A549 (cell line): ENCODE measurements at regions of chr9 and their contacts with region 1.

Region 1: DNA sequence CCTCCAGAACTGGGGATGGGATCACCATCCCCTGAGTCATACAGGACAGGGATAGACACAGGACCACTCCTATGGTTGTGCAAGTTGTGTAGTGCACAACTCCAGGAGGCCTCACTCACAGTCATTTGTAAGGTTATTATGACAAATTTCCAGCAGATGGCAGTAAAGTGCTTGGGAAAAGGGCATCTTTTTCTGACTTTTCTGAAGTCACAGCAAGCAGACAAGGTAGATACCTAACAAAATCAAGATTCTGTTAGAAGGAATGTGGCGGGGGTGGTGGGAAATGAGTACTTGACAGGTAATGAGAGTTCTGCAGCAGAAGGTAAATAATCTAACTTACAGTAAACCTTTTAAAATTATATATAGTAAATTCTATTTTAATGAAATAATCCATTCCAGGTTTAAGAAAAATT is 16.7 kb upstream of the KIF27 start:
- DNase-seq: peak; percentile 56 to 70
- ATAC-seq: peak; percentile 84 to 86
- H3K4me3 ChIP-seq: no peak overlapping the region
- H3K27ac ChIP-seq: no peak overlapping the region
- H3K4me1 ChIP-seq: peaks cover 23% of the 10 kb centered on the region; the same call in 2 of the 3 replicates
- CTCF ChIP-seq: peak; percentile 84
- EP300 ChIP-seq: no peak
- POLR2A ChIP-seq: no peak
- RAD21 ChIP-seq: peak; percentile 85 to 88

Region 2: GRCh38 chr9:83920927-83921707 is 16.8 kb before region 1 on chr9 and contains the start of gene KIF27:
- CTCF ChIA-PET with region 1: interaction called, 12 read pairs
- POLR2A ChIA-PET with region 1: interaction called, 18 read pairs
- DNase-seq: peak; percentile 88 to 98
- ATAC-seq: peak; percentile 90 to 97
- H3K4me3 ChIP-seq: peak within 1 kb of the TSS; percentile 81
- H3K27ac ChIP-seq: peak within 1 kb of the TSS; percentile 93 to 97
- H3K4me1 ChIP-seq: peaks cover 7% of the 10 kb centered on the region; the same call in 2 of the 3 replicates
- CTCF ChIP-seq: peak; percentile 50
- EP300 ChIP-seq: no peak
- POLR2A ChIP-seq: peak; percentile 85
- RAD21 ChIP-seq: no peak; a peak in 3 of 5 replicates
- polyA plus RNA-seq, gene KIF27: 4.1 and 6.0 TPM in 2 replicates

Region 3: GRCh38 chr9:84315278-84315877 is 377.5 kb after region 1 on chr9:
- CTCF ChIA-PET with region 1: interaction called, 11 read pairs
- POLR2A ChIA-PET with region 1: no interaction called
- DNase-seq: peak; percentile 61 to 71
- ATAC-seq: peak; percentile 80 to 89
- H3K4me3 ChIP-seq: no peak overlapping the region
- H3K27ac ChIP-seq: no peak overlapping the region
- H3K4me1 ChIP-seq: no peaks in the 10 kb centered on the region
- CTCF ChIP-seq: peak; percentile 77
- EP300 ChIP-seq: no peak
- POLR2A ChIP-seq: no peak
- RAD21 ChIP-seq: peak; percentile 75 to 79

Region 4: DNA sequence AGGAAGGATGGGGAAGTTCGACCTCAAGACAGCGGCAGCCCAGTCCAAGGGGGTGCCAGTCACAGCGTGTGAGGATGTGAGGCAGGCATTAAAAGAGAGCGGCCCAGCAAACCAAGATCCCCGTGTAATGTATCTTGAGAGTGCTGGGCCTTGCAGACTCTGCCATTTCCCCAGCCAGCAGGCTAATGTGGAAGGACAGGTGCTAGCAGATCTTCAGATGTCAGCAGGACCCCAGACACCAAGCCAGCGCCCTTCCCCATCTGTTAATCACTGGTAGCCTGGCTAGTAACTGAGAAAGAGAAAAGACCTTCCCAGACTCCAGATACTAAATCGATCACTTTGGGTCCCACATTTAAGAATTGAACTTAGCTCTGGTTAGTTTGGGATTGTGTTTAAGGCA is 793.8 kb after region 1 on chr9:
- CTCF ChIA-PET with region 1: no interaction called
- POLR2A ChIA-PET with region 1: no interaction called
- DNase-seq: no peak
- ATAC-seq: no peak
- H3K4me3 ChIP-seq: no peak overlapping the region
- H3K27ac ChIP-seq: no peak overlapping the region
- H3K4me1 ChIP-seq: no peaks in the 10 kb centered on the region
- CTCF ChIP-seq: no peak
- EP300 ChIP-seq: no peak
- POLR2A ChIP-seq: no peak
- RAD21 ChIP-seq: no peak